ENCODE measurements at regions of chr17 and their contacts with region 1.

Region 1: DNA sequence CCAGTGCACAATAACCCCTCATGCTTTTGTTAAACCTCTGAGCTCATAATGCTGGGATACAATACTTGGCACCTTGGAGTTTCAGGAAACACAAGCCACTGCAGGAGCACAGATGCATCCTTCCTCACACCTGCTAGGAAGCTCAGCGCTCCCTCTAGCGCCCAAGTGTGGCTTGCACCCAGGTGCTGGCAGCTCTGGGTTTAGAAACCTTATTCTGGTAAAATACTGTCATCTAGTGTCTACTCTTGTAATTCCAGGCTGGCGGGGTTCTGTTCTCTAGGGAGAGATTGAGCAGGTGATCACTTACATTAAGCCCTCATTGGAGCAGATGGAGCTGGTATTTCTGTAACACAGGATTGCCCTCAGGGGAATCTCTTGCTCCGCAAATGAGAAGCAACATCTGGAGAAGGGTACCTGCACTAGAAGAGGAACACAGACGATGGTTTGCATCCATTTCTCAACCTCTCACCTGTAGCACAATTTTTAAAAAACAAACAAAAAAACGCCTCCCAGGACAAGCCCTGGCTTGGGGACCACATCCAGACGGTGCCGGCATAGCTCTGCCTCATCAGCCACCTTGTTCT is 1.5 kb downstream of the CCL1 start:
- DNase-seq: peak; percentile 85 to 92 (median 87)
- ATAC-seq: peak; percentile 74 to 97 (median 92)
- H3K4me3 ChIP-seq: no peak overlapping the region
- H3K27ac ChIP-seq: no peak overlapping the region
- H3K4me1 ChIP-seq: peaks cover 0 to 12% (median 3%) of the 10 kb centered on the region in 12 donors
- H3K27me3 ChIP-seq: peaks cover 0 to 13% (median 0%) of the 10 kb centered on the region in 9 donors
- CTCF ChIP-seq: peak; percentile 99 to 100 (median 100)
- POLR2A ChIP-seq: no peak

Region 2: GRCh38 chr17:33779225-33779591 is 582.4 kb before region 1 on chr17:
- intact Hi-C with region 1: loop called in 2 of 10 experiments (anchors 10 kb)
- DNase-seq: peak in 2 of 5 donors; percentile 30 to 31
- ATAC-seq: peak in 1 of 4 donors; percentile 28
- H3K4me3 ChIP-seq: no peak overlapping the region
- H3K27ac ChIP-seq: no peak overlapping the region
- H3K4me1 ChIP-seq: no peaks in the 10 kb centered on the region
- H3K27me3 ChIP-seq: peaks cover 0 to 34% (median 0%) of the 10 kb centered on the region in 9 donors
- CTCF ChIP-seq: peak; percentile 91 to 98 (median 95)
- POLR2A ChIP-seq: no peak

Region 3: DNA sequence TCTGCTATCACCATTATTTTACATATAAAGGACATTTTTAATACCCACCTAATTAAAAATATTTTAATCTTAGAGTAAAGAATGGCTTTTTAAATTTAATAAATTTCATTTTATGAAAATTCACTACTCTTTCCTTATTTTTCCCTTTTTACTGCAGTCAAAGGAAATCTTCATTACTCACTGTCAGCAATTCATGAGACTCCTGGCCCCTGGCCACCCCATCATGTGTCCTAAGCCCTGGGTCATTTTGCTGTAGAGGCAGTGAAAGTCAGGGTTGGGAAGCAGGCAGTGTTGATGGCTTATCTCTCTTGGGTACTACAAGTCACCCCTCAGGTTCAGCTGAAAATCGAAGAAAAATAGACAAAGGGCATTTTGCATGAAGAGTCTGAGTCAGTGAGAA is 575.1 kb before region 1 on chr17:
- intact Hi-C with region 1: loop called in 1 of 10 experiments (anchors 10 kb)
- DNase-seq: peak in 3 of 5 donors; percentile 13 to 46 (median 20)
- ATAC-seq: no peak
- H3K4me3 ChIP-seq: no peak overlapping the region
- H3K27ac ChIP-seq: no peak overlapping the region
- H3K4me1 ChIP-seq: no peaks in the 10 kb centered on the region
- H3K27me3 ChIP-seq: peaks cover 0 to 25% (median 4%) of the 10 kb centered on the region in 9 donors
- CTCF ChIP-seq: no peak
- POLR2A ChIP-seq: no peak

Region 4: GRCh38 chr17:34171245-34171818 is 190.2 kb before region 1 on chr17:
- intact Hi-C with region 1: loop called in 1 of 10 experiments (anchors 1 kb)
- DNase-seq: peak in 4 of 5 donors; percentile 28 to 52 (median 33)
- ATAC-seq: peak in 3 of 4 donors; percentile 41 to 73 (median 73)
- H3K4me3 ChIP-seq: no peak overlapping the region
- H3K27ac ChIP-seq: no peak overlapping the region
- H3K4me1 ChIP-seq: peaks cover 0 to 7% (median 0%) of the 10 kb centered on the region in 12 donors
- H3K27me3 ChIP-seq: peaks cover 0 to 1% (median 0%) of the 10 kb centered on the region in 9 donors
- CTCF ChIP-seq: peak; percentile 63 to 91 (median 84)
- POLR2A ChIP-seq: no peak

Region 5: DNA sequence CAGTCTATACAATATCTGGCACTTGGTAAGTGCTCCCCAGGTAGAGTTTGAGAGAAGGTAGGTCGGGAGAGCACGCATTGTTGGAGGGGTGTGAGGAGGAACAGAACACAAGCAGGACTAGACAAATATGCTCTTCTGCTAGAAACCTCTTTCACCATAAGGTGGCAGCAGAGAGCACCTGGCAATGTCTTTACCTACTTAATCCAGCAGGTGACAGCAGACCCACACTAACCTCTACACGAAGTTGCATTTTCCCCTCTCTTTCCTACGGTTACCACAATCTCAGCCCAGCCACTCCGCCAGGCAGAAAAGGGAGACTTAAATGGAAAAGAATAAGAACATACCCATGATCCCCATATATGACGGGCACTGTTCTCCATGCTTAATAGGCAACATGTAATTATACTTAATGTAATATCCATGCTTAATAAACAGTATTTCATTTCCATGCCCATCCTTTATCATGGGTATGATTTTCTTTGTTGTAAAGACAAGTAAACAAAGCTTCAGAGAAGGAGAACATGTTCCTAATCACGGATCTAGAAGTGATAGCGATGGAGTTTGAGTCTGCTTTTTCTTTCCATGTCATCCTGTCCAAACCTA is 161.5 kb before region 1 on chr17:
- intact Hi-C with region 1: loop called (anchors 1 to 2 kb)
- DNase-seq: peak in 4 of 5 donors; percentile 63 to 79 (median 71)
- ATAC-seq: peak; percentile 81 to 94 (median 92)
- H3K4me3 ChIP-seq: no peak overlapping the region
- H3K27ac ChIP-seq: peak overlapping the region in 2 of 12 donors; percentile 30 to 57
- H3K4me1 ChIP-seq: peaks cover 0 to 32% (median under 1%) of the 10 kb centered on the region in 12 donors
- H3K27me3 ChIP-seq: peaks cover 0 to 17% (median 0%) of the 10 kb centered on the region in 9 donors
- CTCF ChIP-seq: peak; percentile 99 to 100 (median 100)
- POLR2A ChIP-seq: no peak

Region 6: DNA sequence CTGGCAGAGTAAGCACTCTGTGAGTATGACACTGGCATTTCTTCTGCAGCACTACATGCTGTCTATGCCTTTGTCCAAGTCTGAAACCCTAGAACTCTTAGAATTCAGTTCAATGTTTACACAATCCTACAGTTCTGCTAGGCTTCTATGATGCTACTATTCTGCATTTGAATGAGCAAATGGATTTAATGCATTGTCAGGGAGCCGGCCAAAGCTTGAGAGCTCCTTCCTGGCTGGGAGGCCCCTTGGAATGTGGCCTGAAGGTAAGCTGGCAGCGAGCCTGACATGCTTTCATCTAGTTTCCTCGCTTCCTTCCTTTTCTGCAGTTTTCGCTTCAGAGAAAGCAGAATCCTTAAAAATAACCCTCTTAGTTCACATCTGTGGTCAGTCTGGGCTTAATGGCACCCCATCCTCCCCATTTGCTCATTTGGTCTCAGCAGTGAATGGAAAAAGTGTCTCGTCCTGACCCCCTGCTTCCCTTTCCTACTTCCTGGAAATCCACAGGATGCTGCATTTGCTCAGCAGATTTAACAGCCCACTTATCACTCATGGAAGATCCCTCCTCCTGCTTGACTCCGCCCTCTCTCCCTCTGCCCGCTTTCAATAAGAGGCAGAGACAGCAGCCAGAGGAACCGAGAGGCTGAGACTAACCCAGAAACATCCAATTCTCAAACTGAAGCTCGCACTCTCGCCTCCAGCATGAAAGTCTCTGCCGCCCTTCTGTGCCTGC is 106.8 kb before region 1 on chr17 and contains the start of gene CCL2:
- intact Hi-C with region 1: loop called in 1 of 10 experiments (anchors 5 kb)
- DNase-seq: peak; percentile 72 to 85 (median 83)
- ATAC-seq: peak; percentile 33 to 75 (median 63)
- H3K4me3 ChIP-seq: peak within 1 kb of the TSS; percentile 9 to 65 (median 54)
- H3K27ac ChIP-seq: peak within 1 kb of the TSS; percentile 56 to 94 (median 84)
- H3K4me1 ChIP-seq: peaks cover 21 to 78% (median 65%) of the 10 kb centered on the region in 12 donors
- H3K27me3 ChIP-seq: no peaks in the 10 kb centered on the region
- CTCF ChIP-seq: no peak
- POLR2A ChIP-seq: peak in 1 of 2 donors; percentile 81
- total RNA-seq, gene CCL2: 11.8 to 512 (median 43.9) TPM

Region 7: DNA sequence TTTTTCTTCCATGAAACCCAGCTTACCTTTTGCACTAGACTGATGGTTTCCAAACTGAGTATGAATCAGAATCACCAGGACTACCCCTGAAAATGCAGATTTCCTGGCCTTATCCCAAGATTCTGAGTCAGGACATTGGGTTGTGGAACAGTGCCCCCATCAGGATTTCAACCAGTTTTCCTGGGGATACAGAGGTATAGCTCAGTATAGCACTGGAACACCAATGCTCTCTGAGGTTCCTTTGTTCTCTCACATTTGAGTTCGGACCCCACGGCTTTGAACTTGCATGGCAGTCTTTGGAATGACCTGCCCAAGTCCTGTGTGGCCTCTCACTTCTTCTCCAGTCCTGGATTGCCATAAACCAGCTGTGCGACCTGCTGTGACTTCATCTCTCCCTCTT is 55.1 kb before region 1 on chr17:
- intact Hi-C with region 1: loop called in 9 of 10 experiments (anchors 1 to 5 kb)
- DNase-seq: no peak
- ATAC-seq: peak in 3 of 4 donors; percentile 82 to 89 (median 86)
- H3K4me3 ChIP-seq: no peak overlapping the region
- H3K27ac ChIP-seq: peak overlapping the region in 5 of 12 donors; percentile 10 to 72 (median 25)
- H3K4me1 ChIP-seq: peaks cover 0 to 56% (median 21%) of the 10 kb centered on the region in 12 donors
- H3K27me3 ChIP-seq: no peaks in the 10 kb centered on the region
- CTCF ChIP-seq: peak in 11 of 12 donors; percentile 37 to 67 (median 55)
- POLR2A ChIP-seq: no peak

Region 8: GRCh38 chr17:34318474-34318873 is 43.1 kb before region 1 on chr17:
- intact Hi-C with region 1: no loop called
- DNase-seq: no peak
- ATAC-seq: no peak
- H3K4me3 ChIP-seq: no peak overlapping the region
- H3K27ac ChIP-seq: peak overlapping the region in 4 of 12 donors; percentile 5 to 86 (median 35)
- H3K4me1 ChIP-seq: peaks cover 0 to 49% (median 13%) of the 10 kb centered on the region in 12 donors
- H3K27me3 ChIP-seq: no peaks in the 10 kb centered on the region
- CTCF ChIP-seq: peak in 1 of 12 donors; percentile 8
- POLR2A ChIP-seq: no peak

Measured in heart left ventricle (tissue), 16 donors.